ENCODE measurements at regions of chr10 and their contacts with region 1.

Region 1: DNA sequence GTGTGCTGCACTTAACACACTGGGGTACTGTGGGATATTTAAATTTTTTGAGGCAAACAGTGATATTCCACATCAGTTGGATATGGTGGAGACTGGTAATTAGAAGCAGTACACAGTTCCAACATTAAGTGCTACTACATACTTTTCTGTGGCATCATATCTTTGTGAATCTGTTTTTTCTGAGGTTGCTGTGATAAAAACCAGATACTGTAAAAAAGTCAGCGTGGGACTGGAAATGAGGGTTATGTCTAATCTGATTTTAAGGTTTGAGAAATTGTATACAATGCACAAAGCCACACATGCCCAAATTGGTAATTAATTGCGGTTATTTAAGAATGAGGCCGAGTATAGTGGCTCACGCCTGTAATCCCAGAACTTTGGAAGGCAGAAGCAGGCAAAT is 41.2 kb downstream of the TBC1D12 start:
- DNase-seq: no peak
- H3K4me3 ChIP-seq: no peak overlapping the region
- H3K4me3 Mint-ChIP-seq: no peak overlapping the region
- H3K27ac ChIP-seq: no peak overlapping the region
- H3K27ac Mint-ChIP-seq: no peak overlapping the region
- H3K4me1 ChIP-seq: no peaks in the 10 kb centered on the region
- H3K4me1 Mint-ChIP-seq: no peaks in the 10 kb centered on the region
- H3K27me3 ChIP-seq: no peaks in the 10 kb centered on the region
- H3K27me3 Mint-ChIP-seq: peaks cover 2 to 7% of the 10 kb centered on the region in 2 donors

Region 2: GRCh38 chr10:94432443-94432842 is 11.1 kb before region 1 on chr10:
- CTCF ChIA-PET with region 1: interaction called, 22 read pairs
- POLR2A ChIA-PET with region 1: no interaction called
- intact Hi-C with region 1: no loop called
- DNase-seq: no peak
- H3K4me3 ChIP-seq: no peak overlapping the region
- H3K4me3 Mint-ChIP-seq: no peak overlapping the region
- H3K27ac ChIP-seq: no peak overlapping the region
- H3K27ac Mint-ChIP-seq: no peak overlapping the region
- H3K4me1 ChIP-seq: no peaks in the 10 kb centered on the region
- H3K4me1 Mint-ChIP-seq: no peaks in the 10 kb centered on the region
- H3K27me3 ChIP-seq: no peaks in the 10 kb centered on the region
- H3K27me3 Mint-ChIP-seq: peaks cover 2 to 13% of the 10 kb centered on the region in 2 donors

Region 3: GRCh38 chr10:94459385-94459784 is 15.8 kb after region 1 on chr10:
- CTCF ChIA-PET with region 1: interaction called, 22 read pairs
- POLR2A ChIA-PET with region 1: no interaction called
- intact Hi-C with region 1: no loop called
- DNase-seq: no peak
- H3K4me3 ChIP-seq: no peak overlapping the region
- H3K4me3 Mint-ChIP-seq: no peak overlapping the region
- H3K27ac ChIP-seq: no peak overlapping the region
- H3K27ac Mint-ChIP-seq: no peak overlapping the region
- H3K4me1 ChIP-seq: no peaks in the 10 kb centered on the region
- H3K4me1 Mint-ChIP-seq: no peaks in the 10 kb centered on the region
- H3K27me3 ChIP-seq: no peaks in the 10 kb centered on the region
- H3K27me3 Mint-ChIP-seq: peaks cover 1 to 2% of the 10 kb centered on the region in 2 donors

Measured in CD4-positive, alpha-beta memory T cell (primary cell).